Vagina (tissue), 2 donors: ENCODE measurements at regions of chr1 and their contacts with region 1.

Region 1: DNA sequence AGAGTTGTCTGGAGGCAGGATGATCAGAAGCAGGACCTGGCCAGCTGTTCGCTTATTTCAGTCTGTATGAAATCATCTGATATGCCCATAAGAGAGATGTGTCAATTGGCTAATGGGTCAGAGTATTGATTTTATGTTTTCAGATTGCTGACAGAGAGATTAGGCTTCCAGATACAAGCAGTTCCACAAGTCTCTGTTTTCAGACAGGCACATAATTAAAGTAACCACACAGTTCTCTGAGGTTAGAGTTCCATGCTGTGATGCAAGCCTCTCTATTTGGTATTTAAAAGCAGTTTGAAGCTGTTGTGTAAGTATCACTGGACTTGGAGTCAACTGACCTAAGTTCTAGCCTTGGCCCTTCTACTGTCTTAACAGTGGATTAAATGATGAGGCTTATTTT is 50.1 kb downstream of the ATF6 start:
- DNase-seq: no peak
- H3K4me3 ChIP-seq: no peak overlapping the region
- H3K27ac ChIP-seq: no peak overlapping the region
- H3K4me1 ChIP-seq: no peaks in the 10 kb centered on the region
- H3K27me3 ChIP-seq: no peaks in the 10 kb centered on the region
- CTCF ChIP-seq: no peak
- POLR2A ChIP-seq: no peak

Region 2: DNA sequence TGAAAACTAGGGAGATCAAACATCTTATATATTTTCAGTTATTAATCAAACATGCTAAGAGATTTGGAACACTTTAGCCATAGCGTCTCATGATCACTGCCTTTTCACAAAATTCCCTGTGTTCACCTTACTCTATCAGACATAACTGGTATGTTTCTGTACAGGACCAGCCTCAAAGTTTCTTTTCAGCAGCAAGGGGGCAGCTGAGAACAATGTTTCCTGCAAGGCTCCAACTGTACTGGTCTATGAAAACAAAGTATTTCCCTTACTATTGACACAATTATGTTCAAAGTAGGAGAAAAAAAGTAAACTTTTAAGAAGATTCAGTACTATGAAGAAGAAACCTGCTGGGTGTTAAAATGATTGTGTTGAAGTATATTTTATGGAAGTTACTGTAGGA is 48.4 kb after region 1 on chr1:
- intact Hi-C with region 1: loop called (anchors 10 kb)
- DNase-seq: no peak
- H3K4me3 ChIP-seq: no peak overlapping the region
- H3K27ac ChIP-seq: no peak overlapping the region
- H3K4me1 ChIP-seq: no peaks in the 10 kb centered on the region
- H3K27me3 ChIP-seq: no peaks in the 10 kb centered on the region
- CTCF ChIP-seq: peak in 1 of 3 experiments; percentile 28
- POLR2A ChIP-seq: no peak

Region 3: DNA sequence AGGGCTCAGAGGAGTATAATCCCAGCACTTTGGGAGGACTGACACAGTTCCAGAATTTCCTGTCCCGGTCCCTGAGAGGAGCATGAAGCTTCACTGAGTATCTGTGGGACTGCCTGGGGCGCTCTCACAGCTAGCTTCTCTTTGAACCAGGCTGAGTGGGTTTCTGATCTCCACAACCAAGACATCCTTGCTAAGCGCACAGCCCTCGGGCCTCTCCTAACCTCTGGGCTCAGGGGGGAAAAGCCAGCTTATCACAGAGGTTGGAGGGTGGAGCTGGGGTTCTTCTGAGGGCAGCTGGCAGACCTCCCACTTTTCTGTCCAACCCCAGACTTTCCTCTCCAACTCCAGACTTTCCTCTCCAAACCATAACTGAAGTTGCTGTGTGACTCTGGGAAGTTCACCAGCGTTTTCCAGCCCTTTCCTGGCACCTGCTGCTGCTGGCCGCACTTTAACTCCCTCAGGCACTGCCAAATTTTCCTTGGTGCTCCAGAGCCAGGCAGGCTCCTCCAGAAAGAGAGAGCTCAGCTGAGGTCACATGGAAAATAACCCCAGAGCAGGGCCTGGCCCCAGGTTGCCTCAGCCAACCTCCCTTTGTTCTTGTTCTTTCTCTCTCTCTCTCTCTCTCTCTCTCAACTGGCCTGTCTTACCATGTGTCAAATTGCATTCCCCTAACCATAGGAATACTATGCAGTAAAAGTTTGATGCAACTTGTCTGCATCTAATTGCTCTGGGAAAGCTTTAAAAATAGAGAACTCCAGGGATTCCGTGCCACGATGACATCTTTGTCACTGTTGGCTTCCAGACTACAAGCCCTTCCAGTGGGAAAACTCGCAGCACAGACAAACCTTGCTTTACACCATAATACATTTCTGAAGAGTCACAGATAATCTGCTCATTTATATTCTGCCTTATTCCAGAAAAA is 158.0 kb after region 1 on chr1:
- intact Hi-C with region 1: no loop called
- DNase-seq: no peak
- H3K4me3 ChIP-seq: no peak overlapping the region
- H3K27ac ChIP-seq: peak overlapping the region; percentile 2
- H3K4me1 ChIP-seq: no peaks in the 10 kb centered on the region
- H3K27me3 ChIP-seq: no peaks in the 10 kb centered on the region
- CTCF ChIP-seq: no peak
- POLR2A ChIP-seq: no peak